ENCODE measurements at regions of chr4 and their contacts with region 1.

Region 1: DNA sequence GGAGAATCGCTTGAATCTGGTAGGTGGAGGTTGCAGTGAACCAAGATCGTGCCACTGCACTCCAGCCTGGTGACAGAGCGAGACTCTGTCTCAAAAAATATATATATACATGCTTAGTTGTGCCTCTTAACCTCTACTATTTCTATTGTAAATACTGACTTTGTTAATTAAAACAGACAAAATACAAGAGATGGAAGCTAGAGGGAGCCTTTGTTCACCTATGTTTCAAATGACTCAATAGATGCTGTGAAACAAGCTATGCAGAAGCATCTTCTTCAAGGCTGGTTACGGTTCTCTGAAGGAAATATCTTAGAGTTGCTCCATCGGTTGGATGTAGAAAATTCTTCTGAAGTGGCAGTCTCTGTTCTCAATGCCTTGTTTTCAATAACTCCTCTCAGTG is 6.2 kb downstream of the NCAPG start:
- DNase-seq: peak; percentile 30
- CTCF ChIP-seq: peak; percentile 57

Region 2: DNA sequence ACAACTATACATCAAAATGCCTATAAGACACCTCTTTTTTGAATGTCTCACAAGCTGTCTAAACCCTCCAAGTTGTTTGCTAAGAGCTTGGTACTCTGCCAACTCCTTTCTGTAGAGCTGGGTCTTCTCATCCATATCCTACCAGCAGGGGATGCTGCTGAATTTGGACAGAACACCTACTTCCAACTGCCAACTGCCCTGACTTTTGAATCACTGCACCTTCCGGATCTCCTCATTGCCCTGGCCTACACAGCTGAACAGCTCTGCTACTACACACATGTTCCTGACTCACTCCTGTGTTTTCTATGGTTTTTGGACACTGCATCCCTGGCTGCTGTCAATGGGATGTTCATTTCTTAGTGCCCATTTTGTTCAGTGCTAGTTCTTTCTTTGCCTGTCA is 54.3 kb before region 1 on chr4:
- CTCF ChIA-PET with region 1: no interaction called
- POLR2A ChIA-PET with region 1: no interaction called
- DNase-seq: no peak
- CTCF ChIP-seq: no peak

Region 3: DNA sequence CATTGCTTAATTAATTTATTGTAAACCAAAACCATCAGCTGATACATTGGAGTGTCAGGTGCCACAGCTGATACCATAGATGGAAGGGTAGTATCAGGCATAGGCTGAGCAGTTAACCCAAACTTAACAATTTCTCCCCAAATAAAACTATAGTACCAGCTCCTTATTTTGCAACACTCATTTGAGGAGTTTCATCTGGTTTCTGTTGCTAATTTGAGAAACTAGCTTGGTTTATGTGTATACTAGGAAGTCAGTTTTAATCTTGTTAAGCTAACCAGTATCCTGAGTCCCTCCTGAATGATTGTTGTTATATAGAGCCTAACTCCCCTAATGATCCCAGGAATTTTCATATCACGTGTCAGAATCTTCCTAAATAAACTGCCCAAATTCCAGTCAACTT is 19.2 kb before region 1 on chr4:
- CTCF ChIA-PET with region 1: interaction called, 16 read pairs
- POLR2A ChIA-PET with region 1: no interaction called
- DNase-seq: no peak
- CTCF ChIP-seq: no peak

Region 4: GRCh38 chr4:17912011-17912410 is 95.0 kb after region 1 on chr4:
- CTCF ChIA-PET with region 1: interaction called, 3 read pairs
- POLR2A ChIA-PET with region 1: interaction called, 11 read pairs
- DNase-seq: no peak
- CTCF ChIP-seq: no peak

Region 5: GRCh38 chr4:18012134-18012806 is 195.2 kb after region 1 on chr4:
- CTCF ChIA-PET with region 1: interaction called, 10 read pairs
- POLR2A ChIA-PET with region 1: no interaction called
- DNase-seq: no peak
- CTCF ChIP-seq: no peak

Region 6: DNA sequence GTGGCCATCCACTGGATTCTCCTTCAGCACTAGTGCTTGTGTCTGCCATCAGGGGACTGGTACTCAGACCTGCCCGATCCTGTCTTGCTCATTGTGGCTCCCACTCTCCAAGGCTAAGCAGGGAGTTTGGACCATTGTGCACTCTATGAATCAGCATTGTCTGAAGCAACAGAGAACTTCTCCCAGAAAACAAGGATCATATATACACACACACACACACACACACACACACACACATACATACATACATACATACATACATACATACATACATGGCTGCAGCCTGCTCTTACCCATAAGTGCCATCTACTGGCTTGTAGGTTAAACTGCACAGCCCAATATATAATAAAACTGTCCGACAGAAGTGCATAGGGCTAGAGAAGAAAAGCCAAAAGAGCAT is 549.9 kb after region 1 on chr4:
- CTCF ChIA-PET with region 1: interaction called, 54 read pairs
- POLR2A ChIA-PET with region 1: no interaction called
- DNase-seq: no peak
- CTCF ChIP-seq: peak; percentile 74

Region 7: DNA sequence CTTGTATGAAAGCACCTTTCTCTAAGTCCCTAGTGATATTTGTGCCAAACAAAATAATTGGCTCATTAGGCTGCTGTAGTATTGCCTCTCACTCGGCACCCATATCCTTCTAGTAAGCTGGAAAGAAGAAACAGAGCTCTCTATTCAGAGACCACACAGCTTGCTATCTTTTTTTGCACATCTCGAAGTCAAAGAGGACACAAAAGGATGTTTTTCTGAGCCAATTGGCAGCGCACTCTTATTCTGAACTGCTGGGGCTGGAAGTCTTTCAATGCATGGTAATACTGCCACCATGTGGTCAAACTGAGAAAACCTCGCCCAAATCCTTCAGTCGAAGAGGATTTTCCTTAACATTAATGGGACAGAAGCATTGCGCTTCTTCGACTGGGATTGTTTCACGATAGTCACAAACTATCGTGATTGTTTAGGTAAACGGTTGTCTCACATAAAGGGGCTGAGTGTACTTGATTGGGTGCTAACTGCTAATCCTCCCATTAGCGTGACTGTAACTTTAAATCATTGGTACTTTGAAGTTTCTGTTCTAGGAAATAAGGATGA is 776.5 kb after region 1 on chr4:
- CTCF ChIA-PET with region 1: interaction called, 11 read pairs
- POLR2A ChIA-PET with region 1: no interaction called
- DNase-seq: peak; percentile 59
- CTCF ChIP-seq: peak; percentile 82

Measured in GM10248 (cell line).